GM18951 (cell line): ENCODE measurements at regions of chr17 and their contacts with region 1.

Region 1: DNA sequence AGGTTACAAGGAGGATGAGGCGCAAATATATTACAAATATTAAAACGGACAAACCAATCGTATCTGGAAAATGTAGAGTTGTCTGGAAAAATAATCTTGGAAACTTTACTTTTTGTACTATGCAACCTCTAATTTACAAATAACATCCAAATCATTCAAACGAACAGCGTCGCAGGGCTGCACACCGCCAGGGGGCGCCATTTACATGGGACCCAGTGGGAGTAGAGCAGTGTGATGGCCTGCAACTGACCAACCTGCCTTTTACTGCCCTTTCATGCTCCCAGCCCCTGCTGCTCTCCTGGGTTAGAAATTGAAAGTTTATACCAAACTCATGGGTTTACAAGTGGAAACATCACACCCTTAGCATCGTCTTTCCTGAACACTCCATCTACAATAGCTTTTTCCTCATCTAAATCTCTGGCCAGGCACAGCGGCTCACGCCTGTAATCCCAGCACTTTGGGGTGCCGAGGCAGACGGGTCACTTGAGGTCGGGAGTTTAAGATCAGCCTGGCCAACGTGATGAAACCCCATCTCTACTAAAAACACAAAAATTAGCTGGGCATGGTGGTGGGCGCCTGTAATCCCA is 10.0 kb downstream of the PITPNC1 start:
- POLR2A ChIP-seq: no peak

Region 2: GRCh38 chr17:67212689-67213417 is 174.2 kb before region 1 on chr17:
- in situ Hi-C with region 1: no loop called
- POLR2A ChIP-seq: no peak

Region 3: DNA sequence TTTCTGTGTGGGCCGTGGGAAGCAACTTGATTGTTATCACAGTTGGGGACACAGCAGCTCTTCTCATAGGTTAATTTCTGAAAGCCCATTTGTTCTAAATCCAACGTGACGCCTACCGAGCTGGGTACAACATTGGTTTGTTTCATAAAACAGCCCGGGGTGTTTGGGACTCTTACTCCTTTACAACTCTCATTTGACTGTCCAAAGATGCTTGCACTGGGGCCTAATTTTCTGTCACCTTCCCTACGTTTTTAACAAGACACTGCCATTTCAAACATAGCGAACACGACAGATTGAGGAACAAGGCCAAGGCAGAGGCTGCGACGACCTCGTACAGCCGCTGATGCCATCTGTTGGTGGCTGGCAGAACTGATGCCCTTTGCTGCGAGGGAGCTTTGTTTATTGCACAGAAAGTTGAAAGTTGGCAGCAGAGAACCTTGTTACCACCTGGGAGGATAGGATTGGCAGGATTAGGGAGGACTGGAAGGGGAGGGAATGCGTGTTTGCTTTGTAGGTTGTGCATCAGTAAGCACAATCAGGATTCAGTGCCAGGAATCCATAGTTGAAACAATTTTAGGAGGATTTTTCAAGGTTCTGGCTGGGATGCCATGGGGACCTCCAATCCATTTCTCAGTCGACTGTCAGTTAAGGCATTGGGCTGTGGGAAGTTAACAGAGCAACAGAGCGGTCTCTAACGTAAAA is 88.3 kb after region 1 on chr17:
- in situ Hi-C with region 1: loop called (anchors 10 kb)
- POLR2A ChIP-seq: no peak